ENCODE measurements at regions of chr2 and their contacts with region 1.

Region 1: GRCh38 chr2:79860228-79861058 is 347.6 kb downstream of the CTNNA2 start:
- DNase-seq: peak in 1 of 2 experiments; percentile 30
- H3K4me3 ChIP-seq: no peak overlapping the region
- H3K4me3 Mint-ChIP-seq: no peak overlapping the region
- H3K27ac Mint-ChIP-seq: no peak overlapping the region
- H3K4me1 ChIP-seq: no peaks in the 10 kb centered on the region
- H3K4me1 Mint-ChIP-seq: no peaks in the 10 kb centered on the region
- H3K27me3 ChIP-seq: no peaks in the 10 kb centered on the region
- H3K27me3 Mint-ChIP-seq: peaks cover 13% of the 10 kb centered on the region
- CTCF ChIP-seq: peak; percentile 65 to 74

Region 2: DNA sequence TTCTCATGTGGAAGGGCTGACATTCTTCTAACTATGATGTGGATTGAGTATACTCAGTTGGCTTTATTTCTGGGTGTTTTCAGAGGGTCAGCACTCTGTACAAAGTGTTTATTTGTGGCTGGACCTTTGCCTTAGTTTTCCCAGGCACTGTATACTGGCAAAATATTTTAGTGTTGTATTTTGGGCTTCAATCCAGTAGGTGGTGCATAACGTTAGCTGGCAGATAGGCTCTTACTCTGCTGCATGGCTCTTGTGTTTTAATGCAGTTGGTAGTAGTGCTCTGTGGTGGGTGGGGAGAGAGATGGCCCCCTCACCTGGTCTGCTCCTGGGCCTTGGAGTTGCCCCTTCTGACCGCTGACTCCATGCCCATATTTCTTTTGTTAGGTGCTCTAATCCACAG is 625.3 kb before region 1 on chr2:
- CTCF ChIA-PET with region 1: no interaction called
- POLR2A ChIA-PET with region 1: no interaction called
- intact Hi-C with region 1: loop called (anchors 1 kb)
- DNase-seq: no peak
- H3K4me3 ChIP-seq: no peak overlapping the region
- H3K4me3 Mint-ChIP-seq: no peak overlapping the region
- H3K27ac Mint-ChIP-seq: no peak overlapping the region
- H3K4me1 ChIP-seq: no peaks in the 10 kb centered on the region
- H3K4me1 Mint-ChIP-seq: no peaks in the 10 kb centered on the region
- H3K27me3 ChIP-seq: no peaks in the 10 kb centered on the region
- H3K27me3 Mint-ChIP-seq: peaks cover 8% of the 10 kb centered on the region
- CTCF ChIP-seq: peak; percentile 18 to 22

Region 3: GRCh38 chr2:79327460-79327859 is 533.0 kb before region 1 on chr2:
- CTCF ChIA-PET with region 1: no interaction called
- POLR2A ChIA-PET with region 1: no interaction called
- intact Hi-C with region 1: loop called (anchors 5 kb)
- DNase-seq: no peak
- H3K4me3 ChIP-seq: no peak overlapping the region
- H3K4me3 Mint-ChIP-seq: no peak overlapping the region
- H3K27ac Mint-ChIP-seq: no peak overlapping the region
- H3K4me1 ChIP-seq: no peaks in the 10 kb centered on the region
- H3K4me1 Mint-ChIP-seq: no peaks in the 10 kb centered on the region
- H3K27me3 ChIP-seq: no peaks in the 10 kb centered on the region
- H3K27me3 Mint-ChIP-seq: no peaks in the 10 kb centered on the region
- CTCF ChIP-seq: peak in 1 of 2 experiments; percentile 0

Measured in Caco-2 (cell line).